Activated naive CD4-positive, alpha-beta T cell treated with anti-CD3 and anti-CD28 coated beads for 36 hours (primary cell): ENCODE measurements at regions of chr22 and their contacts with region 1.

Region 1: DNA sequence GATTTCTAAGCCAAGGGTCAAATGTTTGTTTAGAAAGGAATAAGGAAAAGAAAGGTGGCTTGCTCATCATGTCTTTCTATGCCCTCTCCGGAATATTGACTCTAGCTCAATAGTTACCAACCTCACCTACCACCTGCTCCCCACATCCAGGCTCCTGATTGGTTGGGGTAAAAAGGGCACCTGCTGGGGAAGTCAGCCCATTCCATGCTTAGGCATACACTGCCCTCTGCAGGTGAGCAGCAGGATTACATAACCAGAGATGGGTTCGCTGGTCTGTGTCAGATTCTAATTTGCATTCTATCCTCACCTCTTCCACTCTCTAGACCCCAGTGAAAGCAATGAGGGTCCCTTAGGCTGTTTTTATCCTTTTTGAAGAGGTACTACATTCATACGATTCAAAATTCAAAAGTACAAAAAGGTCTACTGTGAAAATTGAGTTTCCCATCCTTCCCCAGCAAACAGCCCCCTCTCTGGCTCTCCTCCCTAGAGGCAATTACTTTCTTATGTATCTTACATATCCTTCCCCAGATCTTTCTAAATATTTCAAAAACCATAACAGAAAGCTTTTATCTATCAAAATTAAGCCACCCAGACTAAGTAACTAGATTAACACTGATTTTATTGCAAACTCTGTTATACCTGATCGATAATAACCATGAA is 98.0 kb upstream of the ASPHD2 start:
- DNase-seq: peak; percentile 75
- H3K4me3 Mint-ChIP-seq: no peak overlapping the region
- H3K27ac Mint-ChIP-seq: no peak overlapping the region
- H3K4me1 Mint-ChIP-seq: no peaks in the 10 kb centered on the region
- H3K27me3 Mint-ChIP-seq: peaks cover 16% of the 10 kb centered on the region

Region 2: DNA sequence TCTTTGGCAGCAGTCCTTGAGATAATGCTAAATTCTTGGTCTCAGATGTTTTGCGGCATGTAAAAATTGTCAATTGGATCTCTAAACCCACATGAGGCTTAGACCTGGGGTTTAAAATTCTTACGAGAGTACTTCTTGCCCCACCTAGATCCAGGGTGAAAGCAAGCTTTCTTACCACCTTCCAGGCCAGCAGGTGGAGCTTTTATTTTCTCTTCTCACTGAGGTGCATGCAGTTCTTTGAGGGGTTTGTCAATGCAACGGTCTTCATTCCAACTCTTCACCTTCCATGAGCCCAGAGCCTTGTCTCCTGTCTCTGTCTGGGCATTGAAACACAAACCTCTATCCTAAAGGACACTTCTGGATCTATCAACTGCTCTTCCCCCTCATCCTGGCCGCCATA is 435.0 kb before region 1 on chr22:
- CTCF ChIA-PET with region 1: no interaction called
- intact Hi-C with region 1: loop called (anchors 2 kb)
- DNase-seq: peak; percentile 11
- H3K4me3 Mint-ChIP-seq: no peak overlapping the region
- H3K27ac Mint-ChIP-seq: no peak overlapping the region
- H3K4me1 Mint-ChIP-seq: no peaks in the 10 kb centered on the region
- H3K27me3 Mint-ChIP-seq: peaks cover 5% of the 10 kb centered on the region

Region 3: DNA sequence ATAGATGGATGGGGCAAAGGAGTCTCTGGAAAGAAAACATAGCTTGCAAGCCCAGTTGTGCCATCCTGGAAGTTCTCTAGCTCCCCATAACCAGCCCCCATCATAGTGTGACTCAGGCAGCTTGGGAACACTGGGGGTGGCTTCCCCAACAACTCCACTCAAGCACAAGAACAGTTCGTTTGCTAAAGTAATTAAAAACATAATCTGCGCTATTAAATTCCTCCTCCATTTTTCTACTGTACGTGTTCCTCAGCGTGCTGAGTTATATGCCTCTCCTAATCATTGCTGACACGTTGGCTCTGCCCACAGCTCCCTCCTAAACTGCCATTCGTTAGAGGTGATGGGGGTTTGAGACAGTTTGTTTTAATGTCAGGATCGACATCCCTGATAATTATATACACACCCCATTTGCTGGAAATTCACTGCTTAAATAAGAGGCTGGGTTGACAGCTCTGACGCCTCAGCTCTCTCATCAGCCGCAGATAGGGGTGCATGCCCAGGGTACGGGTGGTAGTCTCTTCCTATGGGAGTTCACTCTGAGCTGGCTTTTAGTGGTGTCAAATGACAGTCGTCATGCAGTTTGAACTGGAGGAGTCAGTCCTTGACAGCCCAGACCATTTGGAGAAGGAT is 221.3 kb before region 1 on chr22:
- CTCF ChIA-PET with region 1: no interaction called
- intact Hi-C with region 1: no loop called
- DNase-seq: no peak
- H3K4me3 Mint-ChIP-seq: no peak overlapping the region
- H3K27ac Mint-ChIP-seq: no peak overlapping the region
- H3K4me1 Mint-ChIP-seq: no peaks in the 10 kb centered on the region
- H3K27me3 Mint-ChIP-seq: peaks cover 26% of the 10 kb centered on the region

Region 4: DNA sequence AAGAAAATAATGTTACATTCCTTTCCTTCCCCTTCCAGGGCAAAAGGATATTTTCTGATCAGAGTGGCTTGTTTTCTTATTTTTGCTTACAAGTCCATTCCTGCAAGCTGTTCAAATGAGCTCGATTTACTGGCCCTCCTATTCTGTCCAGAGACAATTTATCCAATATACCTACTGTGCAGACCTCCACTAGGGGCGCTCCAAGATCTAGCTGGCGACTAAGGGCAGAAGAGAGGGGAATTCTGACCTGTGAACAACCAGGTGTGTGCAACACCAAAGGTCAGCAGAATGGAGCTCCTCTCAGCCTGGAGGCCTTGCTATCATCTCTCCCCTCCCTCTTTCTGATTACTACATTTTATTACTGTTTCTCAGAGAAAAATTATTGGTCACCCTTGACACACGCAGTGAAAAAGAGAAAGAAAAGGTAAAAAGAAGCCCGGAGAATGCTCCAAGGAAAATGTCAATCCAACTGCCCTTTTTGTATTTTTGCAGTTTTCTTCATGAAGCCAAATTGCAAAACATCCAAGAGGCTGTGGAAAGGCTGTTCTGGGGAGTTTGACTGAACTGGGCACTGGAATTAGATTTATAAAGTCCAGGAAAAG is 158.6 kb before region 1 on chr22:
- CTCF ChIA-PET with region 1: interaction called, 13 read pairs
- intact Hi-C with region 1: loop called (anchors 2 kb)
- DNase-seq: peak; percentile 56
- H3K4me3 Mint-ChIP-seq: no peak overlapping the region
- H3K27ac Mint-ChIP-seq: no peak overlapping the region
- H3K4me1 Mint-ChIP-seq: peaks cover 8% of the 10 kb centered on the region
- H3K27me3 Mint-ChIP-seq: peaks cover 37% of the 10 kb centered on the region

Region 5: GRCh38 chr22:26259519-26259918 is 71.6 kb before region 1 on chr22:
- CTCF ChIA-PET with region 1: interaction called, 4 read pairs
- intact Hi-C with region 1: loop called (anchors 2 kb)
- DNase-seq: peak; percentile 61
- H3K4me3 Mint-ChIP-seq: no peak overlapping the region
- H3K27ac Mint-ChIP-seq: no peak overlapping the region
- H3K4me1 Mint-ChIP-seq: no peaks in the 10 kb centered on the region
- H3K27me3 Mint-ChIP-seq: peaks cover 21% of the 10 kb centered on the region

Region 6: DNA sequence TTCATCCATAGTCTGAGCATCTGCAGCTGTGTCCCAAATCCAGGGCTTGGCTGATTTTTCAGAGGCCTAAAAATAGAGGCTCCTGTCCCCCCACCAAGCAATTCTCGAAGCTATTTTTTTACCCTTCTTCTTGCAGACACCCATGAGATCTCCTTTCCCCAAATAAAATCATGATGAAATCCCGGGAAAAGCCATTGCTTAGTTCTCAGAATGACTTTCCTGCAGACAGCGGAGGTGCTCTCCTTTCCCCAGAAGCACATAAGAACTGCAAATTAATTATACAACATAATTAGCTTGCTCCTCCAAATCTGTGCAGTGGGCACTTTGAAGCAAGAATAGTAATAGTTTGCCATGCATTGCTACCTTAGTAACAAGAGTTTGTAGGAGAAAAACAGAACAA is 14.4 kb after region 1 on chr22:
- CTCF ChIA-PET with region 1: interaction called, 11 read pairs
- intact Hi-C with region 1: no loop called
- DNase-seq: no peak
- H3K4me3 Mint-ChIP-seq: no peak overlapping the region
- H3K27ac Mint-ChIP-seq: no peak overlapping the region
- H3K4me1 Mint-ChIP-seq: no peaks in the 10 kb centered on the region
- H3K27me3 Mint-ChIP-seq: peaks cover 17% of the 10 kb centered on the region